CD14-positive monocyte (primary cell): ENCODE measurements at regions of chr14 and their contacts with region 1.

Region 1: DNA sequence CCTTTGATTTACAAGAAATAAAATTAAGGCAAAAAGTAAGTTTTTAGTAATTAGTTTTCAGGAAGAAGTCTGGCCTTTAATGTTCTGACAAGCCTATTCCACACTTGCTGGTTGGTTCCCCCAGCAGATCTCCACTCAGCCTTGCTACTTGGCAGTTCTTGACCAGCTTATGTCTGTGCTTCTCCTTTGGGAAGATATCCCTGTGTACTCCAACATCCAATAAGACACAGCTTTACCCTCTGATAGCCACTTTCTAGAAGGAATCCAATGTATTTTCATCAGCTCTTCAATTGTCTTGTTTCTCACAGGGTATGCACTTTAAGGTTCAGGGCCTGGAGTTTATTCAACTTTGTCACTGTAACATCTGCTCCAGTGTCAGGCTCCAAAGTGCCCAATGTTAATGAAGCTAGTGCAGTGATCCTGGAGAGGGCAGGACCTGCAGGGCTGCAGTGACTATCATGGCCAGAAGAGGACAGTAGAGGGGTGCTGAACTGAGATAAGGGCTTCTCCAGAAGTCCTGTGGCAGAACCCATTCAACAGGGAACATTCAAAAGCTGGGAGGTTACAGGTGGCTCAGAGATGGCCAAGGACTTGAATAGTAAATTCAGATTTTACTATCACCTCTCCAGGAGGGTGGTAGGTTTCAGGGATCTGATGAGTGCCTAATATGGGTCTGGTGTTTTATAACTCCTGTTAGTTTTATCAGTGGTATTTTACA is 22.9 kb downstream of the JKAMP start:
- DNase-seq: peak; percentile 25 to 45 (median 30)
- H3K4me3 ChIP-seq: no peak overlapping the region
- H3K4me3 Mint-ChIP-seq: no peak overlapping the region
- H3K27ac ChIP-seq: no peak overlapping the region
- H3K27ac Mint-ChIP-seq: peak overlapping the region in 2 of 7 donors; percentile 5 to 66
- H3K4me1 ChIP-seq: no peaks in the 10 kb centered on the region
- H3K4me1 Mint-ChIP-seq: no peaks in the 10 kb centered on the region
- H3K27me3 ChIP-seq: no peaks in the 10 kb centered on the region
- H3K27me3 Mint-ChIP-seq: peaks cover 0 to 2% (median 1%) of the 10 kb centered on the region in 3 donors
- CTCF ChIP-seq: peak; percentile 89

Region 2: GRCh38 chr14:59576332-59577294 is 69.4 kb after region 1 on chr14 and contains the start of gene CCDC175:
- intact Hi-C with region 1: loop called in 1 of 2 experiments (anchors 5 kb)
- DNase-seq: peak; percentile 83 to 90 (median 88)
- H3K4me3 ChIP-seq: peak within 1 kb of the TSS; percentile 23 to 76 (median 55)
- H3K4me3 Mint-ChIP-seq: peak within 1 kb of the TSS; percentile 77 to 92
- H3K27ac ChIP-seq: no peak within 1 kb of the TSS
- H3K27ac Mint-ChIP-seq: peak within 1 kb of the TSS in 2 of 7 donors; percentile 30 to 36
- H3K4me1 ChIP-seq: peaks cover 11 to 12% of the 10 kb centered on the region in 2 donors
- H3K4me1 Mint-ChIP-seq: peaks cover 10% of the 10 kb centered on the region
- H3K27me3 ChIP-seq: peaks cover 0 to 3% of the 10 kb centered on the region in 2 donors
- H3K27me3 Mint-ChIP-seq: peaks cover 4 to 14% (median 9%) of the 10 kb centered on the region in 3 donors
- CTCF ChIP-seq: peak; percentile 97
- polyA plus RNA-seq, gene CCDC175: not detected

Region 3: DNA sequence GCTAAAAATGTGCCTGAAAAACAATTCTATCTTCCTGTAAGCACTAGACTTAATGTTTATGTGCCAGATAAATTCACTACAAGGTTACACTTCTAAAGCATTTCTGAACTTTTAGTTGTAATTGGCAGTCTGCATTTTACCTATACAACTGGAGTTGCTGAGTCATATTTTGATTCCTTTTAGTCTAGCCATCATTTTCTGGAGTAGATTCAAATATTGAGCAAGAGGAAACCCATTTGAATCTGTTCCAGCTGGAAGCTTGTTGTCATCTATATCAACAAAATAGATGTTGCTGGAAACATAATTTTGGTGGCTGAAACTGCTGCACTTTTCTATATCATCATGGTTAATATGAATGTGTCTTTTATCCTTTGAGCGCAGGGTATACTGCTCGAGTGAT is 191.6 kb after region 1 on chr14:
- intact Hi-C with region 1: no loop called
- DNase-seq: peak in 1 of 3 donors; percentile 1
- H3K4me3 ChIP-seq: no peak overlapping the region
- H3K4me3 Mint-ChIP-seq: no peak overlapping the region
- H3K27ac ChIP-seq: no peak overlapping the region
- H3K27ac Mint-ChIP-seq: peak overlapping the region in 1 of 7 donors; percentile 34
- H3K4me1 ChIP-seq: peaks cover 15 to 16% of the 10 kb centered on the region in 2 donors
- H3K4me1 Mint-ChIP-seq: peaks cover 20% of the 10 kb centered on the region
- H3K27me3 ChIP-seq: no peaks in the 10 kb centered on the region
- H3K27me3 Mint-ChIP-seq: peaks cover 0 to 2% (median 0%) of the 10 kb centered on the region in 3 donors
- CTCF ChIP-seq: no peak

Region 4: GRCh38 chr14:59785629-59786028 is 278.4 kb after region 1 on chr14:
- intact Hi-C with region 1: no loop called
- DNase-seq: no peak
- H3K4me3 ChIP-seq: no peak overlapping the region
- H3K4me3 Mint-ChIP-seq: no peak overlapping the region
- H3K27ac ChIP-seq: no peak overlapping the region
- H3K27ac Mint-ChIP-seq: no peak overlapping the region
- H3K4me1 ChIP-seq: no peaks in the 10 kb centered on the region
- H3K4me1 Mint-ChIP-seq: no peaks in the 10 kb centered on the region
- H3K27me3 ChIP-seq: no peaks in the 10 kb centered on the region
- H3K27me3 Mint-ChIP-seq: peaks cover 0 to 3% (median 2%) of the 10 kb centered on the region in 3 donors
- CTCF ChIP-seq: no peak

Region 5: DNA sequence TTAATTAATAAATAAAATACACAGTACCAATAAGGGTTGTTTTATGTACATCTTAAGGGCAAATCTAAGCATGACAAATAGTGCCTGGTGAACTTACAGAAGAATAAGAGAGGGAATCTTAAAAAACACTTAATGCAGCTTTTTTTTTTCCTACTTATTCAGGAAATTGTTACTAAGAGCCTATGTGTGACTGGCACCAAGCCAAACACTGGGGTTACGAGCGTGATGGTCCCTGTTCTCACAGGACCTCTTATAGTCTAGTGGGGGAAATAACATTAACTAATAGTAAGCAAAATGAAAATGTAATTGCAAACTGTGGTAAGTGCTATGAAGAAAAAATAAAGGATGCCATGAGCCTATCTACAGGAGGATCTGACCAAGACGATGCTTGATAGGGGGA is 309.7 kb after region 1 on chr14:
- intact Hi-C with region 1: no loop called
- DNase-seq: no peak
- H3K4me3 ChIP-seq: no peak overlapping the region
- H3K4me3 Mint-ChIP-seq: no peak overlapping the region
- H3K27ac ChIP-seq: no peak overlapping the region
- H3K27ac Mint-ChIP-seq: peak overlapping the region in 1 of 7 donors; percentile 31
- H3K4me1 ChIP-seq: no peaks in the 10 kb centered on the region
- H3K4me1 Mint-ChIP-seq: no peaks in the 10 kb centered on the region
- H3K27me3 ChIP-seq: no peaks in the 10 kb centered on the region
- H3K27me3 Mint-ChIP-seq: peaks cover 4 to 5% (median 4%) of the 10 kb centered on the region in 3 donors
- CTCF ChIP-seq: no peak